ENCODE measurements at regions of chr2 and their contacts with region 1.

Region 1: GRCh38 chr2:230987137-230988020 is 8.5 kb upstream of the SPATA3 start:
- DNase-seq: peak; percentile 76 to 90
- H3K4me3 ChIP-seq: peak overlapping the region; percentile 30
- H3K4me1 ChIP-seq: peaks cover 6% of the 10 kb centered on the region
- H3K27me3 ChIP-seq: no peaks in the 10 kb centered on the region

Region 2: DNA sequence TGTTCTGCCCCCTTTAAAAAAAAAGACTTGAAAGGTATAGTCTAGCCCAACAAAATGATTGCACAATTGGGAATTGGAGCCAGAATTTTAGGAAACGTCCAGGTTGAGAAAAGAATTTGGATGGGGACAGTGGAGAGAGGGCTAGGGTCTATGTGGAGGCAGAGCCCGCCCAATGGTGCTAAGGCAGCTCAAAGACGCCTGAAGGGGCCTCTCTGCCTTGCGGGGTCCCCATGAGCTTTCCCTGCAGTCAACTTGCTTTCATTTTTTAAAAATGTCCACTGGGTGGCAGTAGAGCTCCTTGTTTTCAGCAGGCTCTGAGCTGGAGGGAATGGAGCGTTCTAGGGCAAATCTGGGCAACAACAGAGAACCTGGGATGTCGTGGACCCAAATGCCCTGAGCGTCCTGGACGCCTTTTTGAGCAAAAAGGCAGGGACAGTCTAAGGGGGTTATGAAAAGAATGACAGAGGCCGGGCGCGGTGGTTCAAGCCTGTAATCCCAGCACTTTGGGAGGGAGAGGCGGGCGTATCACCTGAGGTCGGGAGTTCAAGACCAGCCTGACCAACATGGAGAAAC is 162.9 kb before region 1 on chr2:
- in situ Hi-C with region 1: loop called (anchors 5 kb)
- DNase-seq: peak; percentile 78 to 83
- H3K4me3 ChIP-seq: no peak overlapping the region
- H3K4me1 ChIP-seq: peaks cover 18% of the 10 kb centered on the region
- H3K27me3 ChIP-seq: no peaks in the 10 kb centered on the region

Region 3: DNA sequence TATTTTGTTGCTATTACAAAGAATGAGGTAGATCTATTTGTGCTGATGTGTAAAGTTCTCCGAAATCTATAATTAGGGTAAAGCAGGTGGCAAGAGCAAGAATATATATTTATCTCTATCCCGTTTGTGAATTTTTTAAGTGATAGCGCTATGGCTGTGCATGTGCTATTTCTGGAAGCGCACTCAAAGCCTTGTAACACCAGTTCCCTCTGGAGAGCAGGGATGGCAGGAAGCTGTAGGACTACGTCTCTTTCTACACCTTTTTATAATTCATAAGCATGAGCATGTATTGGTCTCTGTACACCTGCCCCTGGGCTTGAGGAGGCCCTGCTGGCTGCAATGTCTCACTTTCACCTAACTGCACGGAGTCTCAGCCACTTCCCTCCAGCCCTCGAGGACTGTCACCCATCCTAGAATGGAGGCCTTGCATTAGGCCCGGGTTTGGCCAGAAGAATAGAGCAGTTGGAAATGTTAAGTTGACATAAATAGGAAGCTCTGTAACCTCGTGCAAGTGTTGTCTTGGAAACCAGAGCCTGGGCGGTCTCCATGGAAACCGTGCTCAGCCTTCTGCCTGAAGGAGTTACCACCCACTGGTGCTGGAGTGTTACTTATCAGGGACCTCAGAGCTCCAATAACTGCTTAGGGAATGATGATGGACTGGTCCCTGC is 101.8 kb before region 1 on chr2:
- in situ Hi-C with region 1: no loop called
- DNase-seq: peak; percentile 53 to 74
- H3K4me3 ChIP-seq: no peak overlapping the region
- H3K4me1 ChIP-seq: no peaks in the 10 kb centered on the region
- H3K27me3 ChIP-seq: no peaks in the 10 kb centered on the region

Region 4: GRCh38 chr2:230902180-230902899 is 85.0 kb before region 1 on chr2:
- in situ Hi-C with region 1: loop called (anchors 5 kb)
- DNase-seq: peak; percentile 41 to 80
- H3K4me3 ChIP-seq: no peak overlapping the region
- H3K4me1 ChIP-seq: no peaks in the 10 kb centered on the region
- H3K27me3 ChIP-seq: 0 out of 2 replicates have a peak, but pooled peaks cover 3% of the 10 kb centered on the region

Region 5: GRCh38 chr2:231280846-231281245 is 293.5 kb after region 1 on chr2:
- in situ Hi-C with region 1: no loop called
- DNase-seq: no peak
- H3K4me3 ChIP-seq: no peak overlapping the region
- H3K4me1 ChIP-seq: no peaks in the 10 kb centered on the region; the same call in 1 of the 2 replicates
- H3K27me3 ChIP-seq: no peaks in the 10 kb centered on the region

Measured in HAP-1 (cell line).